Activated CD8-positive, alpha-beta T cell treated with anti-CD3 and anti-CD28 coated beads for 36 hours (primary cell): ENCODE measurements at regions of chr20 and their contacts with region 1.

Region 1: DNA sequence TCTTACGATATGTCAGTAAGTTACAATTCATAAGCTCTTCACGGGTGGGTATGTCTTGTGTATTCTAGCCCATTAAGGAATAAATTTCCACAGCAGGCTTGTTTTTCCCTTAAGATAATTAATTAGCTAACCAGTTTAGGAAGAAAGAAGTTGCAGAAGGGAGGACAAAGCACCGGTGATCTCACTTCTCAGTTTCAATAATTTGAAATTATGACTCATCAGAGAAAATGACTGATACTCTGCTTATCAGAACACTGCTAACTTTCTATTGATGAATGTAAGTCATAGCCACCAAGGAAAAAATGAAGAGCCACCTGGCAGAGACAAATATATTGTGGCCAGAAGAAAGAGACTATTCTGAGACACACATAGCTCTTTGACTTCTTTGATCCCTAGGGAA is 35.0 kb upstream of the ENTPD6 start:
- DNase-seq: no peak
- ATAC-seq: peak; percentile 93
- H3K4me3 Mint-ChIP-seq: no peak overlapping the region
- H3K27ac Mint-ChIP-seq: peak overlapping the region; percentile 6
- H3K4me1 Mint-ChIP-seq: peaks cover 16% of the 10 kb centered on the region
- H3K27me3 Mint-ChIP-seq: peaks cover 3% of the 10 kb centered on the region
- CTCF ChIP-seq: no peak

Region 2: DNA sequence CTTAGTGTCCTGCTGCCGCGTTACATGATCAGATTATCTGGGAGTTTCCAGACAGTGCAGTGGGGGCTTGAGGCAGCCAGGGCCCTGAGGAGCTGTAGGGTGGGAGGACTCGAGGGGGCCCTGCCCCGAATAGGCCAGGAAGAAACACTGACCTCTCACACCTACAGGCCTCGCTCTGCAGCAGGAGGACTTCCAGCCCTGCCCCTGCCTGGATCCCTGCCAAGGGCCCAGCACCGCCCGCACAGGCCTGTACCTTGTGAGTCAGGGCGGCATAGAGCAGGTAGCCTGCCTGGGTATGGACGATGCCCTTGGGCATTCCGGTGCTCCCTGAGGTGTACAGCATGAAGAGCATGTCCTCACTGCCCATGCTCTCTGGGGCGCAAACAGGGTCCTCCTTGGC is 137.8 kb before region 1 on chr20:
- CTCF ChIA-PET with region 1: no interaction called
- POLR2A ChIA-PET with region 1: no interaction called
- intact Hi-C with region 1: no loop called
- DNase-seq: no peak
- ATAC-seq: no peak
- H3K4me3 Mint-ChIP-seq: no peak overlapping the region
- H3K27ac Mint-ChIP-seq: no peak overlapping the region
- H3K4me1 Mint-ChIP-seq: no peaks in the 10 kb centered on the region
- H3K27me3 Mint-ChIP-seq: no peaks in the 10 kb centered on the region
- CTCF ChIP-seq: no peak

Region 3: DNA sequence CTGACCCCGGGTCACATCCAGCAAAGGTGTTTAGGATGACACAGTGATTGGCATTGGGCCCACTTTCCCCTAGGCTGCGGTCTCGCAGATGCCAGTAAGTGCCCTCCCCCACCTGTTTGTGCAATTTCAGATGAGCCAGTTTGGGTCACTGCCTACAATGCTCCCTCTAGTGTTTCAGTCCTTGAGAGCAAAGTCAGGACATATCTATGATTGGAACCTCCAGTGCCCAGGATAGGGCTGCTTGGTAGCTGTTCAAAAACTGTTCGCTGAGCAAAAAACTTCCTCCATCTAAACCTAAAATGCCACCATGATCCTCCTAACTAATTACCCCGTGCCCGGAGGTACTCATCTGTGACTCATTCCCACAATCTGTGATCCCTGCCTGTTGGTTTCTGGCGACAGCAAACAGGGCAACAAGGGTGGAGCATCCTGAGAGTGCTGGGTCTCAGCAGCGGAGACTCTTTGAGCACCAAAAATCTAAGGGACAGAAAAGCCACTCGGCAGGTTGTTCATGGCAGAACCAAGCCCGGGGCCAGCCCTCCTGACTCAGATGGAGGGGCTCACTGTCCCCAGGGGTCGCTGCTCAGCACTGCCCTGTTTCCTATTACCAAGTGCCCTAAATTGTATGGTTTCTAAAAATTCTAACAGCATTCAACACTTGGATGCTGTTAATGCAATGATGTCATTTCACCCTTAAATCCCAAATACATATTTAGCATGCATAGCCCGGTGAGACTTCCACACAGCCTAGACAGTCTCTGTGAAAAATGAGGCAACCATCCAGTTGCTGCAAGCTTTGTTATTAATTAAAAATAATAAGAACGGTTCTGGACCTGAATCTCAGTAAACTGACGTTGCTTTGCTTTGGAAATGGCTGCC is 83.5 kb before region 1 on chr20:
- CTCF ChIA-PET with region 1: no interaction called
- POLR2A ChIA-PET with region 1: no interaction called
- intact Hi-C with region 1: loop called (anchors 5 kb)
- DNase-seq: peak; percentile 46
- ATAC-seq: peak; percentile 42
- H3K4me3 Mint-ChIP-seq: no peak overlapping the region
- H3K27ac Mint-ChIP-seq: no peak overlapping the region
- H3K4me1 Mint-ChIP-seq: peaks cover 9% of the 10 kb centered on the region
- H3K27me3 Mint-ChIP-seq: peaks cover 57% of the 10 kb centered on the region
- CTCF ChIP-seq: no peak

Region 4: GRCh38 chr20:25136643-25137559 is 23.6 kb before region 1 on chr20:
- CTCF ChIA-PET with region 1: no interaction called
- POLR2A ChIA-PET with region 1: no interaction called
- intact Hi-C with region 1: no loop called
- DNase-seq: no peak
- ATAC-seq: no peak
- H3K4me3 Mint-ChIP-seq: no peak overlapping the region
- H3K27ac Mint-ChIP-seq: no peak overlapping the region
- H3K4me1 Mint-ChIP-seq: no peaks in the 10 kb centered on the region
- H3K27me3 Mint-ChIP-seq: no peaks in the 10 kb centered on the region
- CTCF ChIP-seq: no peak